Left lung (tissue), 14 donors: ENCODE measurements at regions of chr3 and their contacts with region 1.

Region 1: DNA sequence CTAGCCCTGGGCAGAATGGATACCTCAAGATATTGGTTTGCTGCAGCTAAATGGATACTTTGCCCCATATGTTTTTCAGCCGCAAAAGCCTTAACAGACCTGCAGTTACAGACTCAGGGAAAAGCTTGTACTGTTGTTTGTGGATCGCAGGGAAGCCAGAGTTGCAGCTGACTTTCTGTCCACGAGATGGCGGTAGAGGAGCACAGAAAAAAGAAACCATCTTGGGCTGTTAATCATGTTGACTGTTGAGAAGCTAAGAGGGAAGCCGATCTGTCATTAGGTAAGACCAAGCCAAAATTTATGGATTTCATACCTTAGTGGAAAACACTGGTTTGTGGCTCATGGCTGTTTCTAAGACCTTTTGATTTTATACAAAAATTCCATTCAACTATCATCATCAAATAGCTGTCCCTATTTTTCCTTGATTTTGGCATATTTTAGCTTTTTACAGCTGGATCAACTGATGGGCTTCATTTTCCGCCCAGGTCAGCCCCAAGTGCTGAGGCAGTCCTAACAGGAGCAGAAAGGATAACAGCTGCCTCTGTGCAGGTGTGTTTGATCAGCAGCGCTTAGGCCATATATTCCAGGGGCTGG is 205.7 kb upstream of the ZPLD1 start:
- DNase-seq: peak in 3 of 4 donors; percentile 47 to 77 (median 70)
- ATAC-seq: peak; percentile 90
- H3K4me3 ChIP-seq: no peak overlapping the region
- H3K27ac ChIP-seq: no peak overlapping the region
- H3K4me1 ChIP-seq: peaks cover 0 to 11% of the 10 kb centered on the region in 2 donors
- H3K27me3 ChIP-seq: no peaks in the 10 kb centered on the region
- CTCF ChIP-seq: peak; percentile 86 to 91

Region 2: GRCh38 chr3:101809178-101810021 is 419.8 kb before region 1 on chr3:
- intact Hi-C with region 1: loop called (anchors 5 to 10 kb)
- DNase-seq: peak in 1 of 4 donors; percentile 42
- ATAC-seq: peak; percentile 80
- H3K4me3 ChIP-seq: no peak overlapping the region
- H3K27ac ChIP-seq: peak overlapping the region in 1 of 2 donors; percentile 38
- H3K4me1 ChIP-seq: peaks cover 6 to 25% of the 10 kb centered on the region in 2 donors
- H3K27me3 ChIP-seq: no peaks in the 10 kb centered on the region
- CTCF ChIP-seq: peak; percentile 45 to 69

Region 3: GRCh38 chr3:102113411-102114041 is 115.6 kb before region 1 on chr3:
- intact Hi-C with region 1: no loop called
- DNase-seq: no peak
- ATAC-seq: no peak
- H3K4me3 ChIP-seq: no peak overlapping the region
- H3K27ac ChIP-seq: no peak overlapping the region
- H3K4me1 ChIP-seq: no peaks in the 10 kb centered on the region
- H3K27me3 ChIP-seq: no peaks in the 10 kb centered on the region
- CTCF ChIP-seq: no peak

Region 4: GRCh38 chr3:102419786-102420185 is 190.6 kb after region 1 on chr3:
- intact Hi-C with region 1: no loop called
- DNase-seq: no peak
- ATAC-seq: no peak
- H3K4me3 ChIP-seq: no peak overlapping the region
- H3K27ac ChIP-seq: no peak overlapping the region
- H3K4me1 ChIP-seq: no peaks in the 10 kb centered on the region
- H3K27me3 ChIP-seq: no peaks in the 10 kb centered on the region
- CTCF ChIP-seq: no peak